Naive thymus-derived CD4-positive, alpha-beta T cell (primary cell): ENCODE measurements at regions of chr15 and their contacts with region 1.

Region 1: GRCh38 chr15:65869127-65869953 is at the start of gene RAB11A:
- DNase-seq: peak; percentile 91 to 97 (median 95)
- ATAC-seq: peak; percentile 96
- H3K4me3 ChIP-seq: peak within 1 kb of the TSS; percentile 94
- H3K4me3 Mint-ChIP-seq: peak within 1 kb of the TSS; percentile 88 to 100 (median 100)
- H3K27ac ChIP-seq: peak within 1 kb of the TSS; percentile 94
- H3K27ac Mint-ChIP-seq: peak within 1 kb of the TSS; percentile 97 to 100 (median 99)
- H3K4me1 ChIP-seq: peaks cover 5 to 24% of the 10 kb centered on the region in 2 donors
- H3K4me1 Mint-ChIP-seq: peaks cover 23 to 37% (median 32%) of the 10 kb centered on the region in 7 donors
- H3K27me3 ChIP-seq: no peaks in the 10 kb centered on the region
- H3K27me3 Mint-ChIP-seq: peaks cover 0 to 5% (median 0%) of the 10 kb centered on the region in 5 donors
- total RNA-seq, gene RAB11A: 80.9 to 201 (median 88.7) TPM

Region 2: DNA sequence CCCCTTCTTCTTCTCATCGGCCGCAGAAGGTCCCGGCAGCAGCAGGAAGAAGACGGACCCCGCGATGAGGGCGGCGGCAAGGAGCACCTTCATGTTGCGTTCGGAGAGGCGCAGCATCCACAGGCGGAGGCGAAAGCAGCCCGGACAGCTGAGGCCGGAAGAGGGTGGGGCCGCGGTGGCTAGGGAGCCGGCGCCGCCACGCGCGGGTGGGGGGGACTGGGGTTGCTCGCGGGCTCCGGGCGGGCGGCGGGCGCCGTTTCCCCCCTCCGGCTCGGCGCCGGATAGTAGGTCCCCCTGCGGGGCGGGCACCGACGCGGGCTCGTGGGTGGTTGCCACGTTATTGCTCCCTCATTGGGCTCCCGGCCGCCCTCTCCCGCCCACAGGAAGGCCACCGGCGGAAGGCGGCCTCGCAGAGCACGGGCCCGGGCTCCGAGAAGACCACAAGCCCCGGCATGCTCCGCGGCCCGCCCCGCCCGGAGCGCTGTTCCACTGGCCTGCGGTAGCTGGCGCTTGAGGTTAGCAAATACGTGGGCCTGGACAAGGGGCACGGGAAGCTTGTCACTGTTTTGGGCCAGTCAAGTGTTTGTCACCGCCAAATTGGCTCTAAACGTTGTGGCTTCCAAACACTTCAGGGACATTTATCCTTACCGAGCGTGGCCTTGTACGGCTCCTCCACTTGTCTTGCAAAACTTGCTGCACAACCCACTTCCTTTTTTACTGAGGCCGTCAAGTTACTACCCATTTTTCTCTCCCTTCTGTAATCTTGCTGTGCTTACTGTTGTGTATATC is 1706.3 kb before region 1 on chr15 and contains the start of gene PPIB:
- CTCF ChIA-PET with region 1: no interaction called
- POLR2A ChIA-PET with region 1: no interaction called
- intact Hi-C with region 1: loop called in 1 of 2 experiments (anchors 5 kb)
- DNase-seq: peak; percentile 89 to 98 (median 96)
- ATAC-seq: peak; percentile 97
- H3K4me3 ChIP-seq: peak within 1 kb of the TSS; percentile 76
- H3K4me3 Mint-ChIP-seq: peak within 1 kb of the TSS; percentile 80 to 97 (median 90)
- H3K27ac ChIP-seq: peak within 1 kb of the TSS; percentile 97
- H3K27ac Mint-ChIP-seq: peak within 1 kb of the TSS; percentile 83 to 97 (median 93)
- H3K4me1 ChIP-seq: peaks cover 17 to 29% of the 10 kb centered on the region in 2 donors
- H3K4me1 Mint-ChIP-seq: peaks cover 30 to 51% (median 46%) of the 10 kb centered on the region in 7 donors
- H3K27me3 ChIP-seq: no peaks in the 10 kb centered on the region
- H3K27me3 Mint-ChIP-seq: peaks cover 0 to 2% (median 0%) of the 10 kb centered on the region in 5 donors
- total RNA-seq, gene PPIB: 160 to 530 (median 184) TPM

Region 3: DNA sequence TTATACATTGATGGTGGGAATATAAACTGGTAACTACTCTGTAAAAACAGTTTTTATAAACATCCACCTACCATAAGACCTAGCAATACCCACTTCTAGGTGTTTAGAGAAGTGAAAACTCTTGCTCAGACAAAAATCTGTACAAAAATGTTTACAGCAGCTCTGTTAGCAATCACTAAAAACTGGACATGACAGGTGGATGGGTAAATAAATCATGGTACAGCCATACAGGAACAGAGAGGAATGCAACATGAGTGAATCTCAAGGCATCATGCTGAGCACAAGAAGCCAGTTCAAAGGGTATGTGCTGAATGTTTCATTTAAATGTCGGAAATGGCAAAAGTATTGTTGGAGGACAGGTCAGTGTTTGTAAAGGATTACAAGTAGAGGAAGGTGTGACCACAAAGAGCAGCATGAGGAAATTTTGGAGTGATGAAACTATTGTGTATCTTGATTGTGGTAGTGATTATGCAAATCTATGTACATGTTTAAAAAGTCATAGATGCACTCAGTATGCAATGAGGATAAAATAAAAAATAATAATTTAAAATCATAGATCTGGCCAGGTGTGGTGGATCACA is 576.3 kb before region 1 on chr15:
- CTCF ChIA-PET with region 1: no interaction called
- POLR2A ChIA-PET with region 1: no interaction called
- intact Hi-C with region 1: no loop called
- DNase-seq: no peak
- ATAC-seq: no peak
- H3K4me3 ChIP-seq: no peak overlapping the region
- H3K4me3 Mint-ChIP-seq: peak overlapping the region in 1 of 10 donors; percentile 12
- H3K27ac ChIP-seq: no peak overlapping the region
- H3K27ac Mint-ChIP-seq: peak overlapping the region in 1 of 9 donors; percentile 62
- H3K4me1 ChIP-seq: peaks cover 12 to 18% of the 10 kb centered on the region in 2 donors
- H3K4me1 Mint-ChIP-seq: peaks cover 12 to 33% (median 21%) of the 10 kb centered on the region in 7 donors
- H3K27me3 ChIP-seq: no peaks in the 10 kb centered on the region
- H3K27me3 Mint-ChIP-seq: peaks cover 0 to 2% (median 0%) of the 10 kb centered on the region in 5 donors

Region 4: GRCh38 chr15:65610871-65611718 is 258.2 kb before region 1 on chr15 and contains the start of gene INTS14:
- CTCF ChIA-PET with region 1: no interaction called
- POLR2A ChIA-PET with region 1: interaction called, 11 read pairs
- intact Hi-C with region 1: loop called (anchors 1 kb)
- DNase-seq: peak; percentile 74 to 96 (median 80)
- ATAC-seq: peak; percentile 99
- H3K4me3 ChIP-seq: peak within 1 kb of the TSS; percentile 97
- H3K4me3 Mint-ChIP-seq: peak within 1 kb of the TSS; percentile 95 to 99 (median 98)
- H3K27ac ChIP-seq: peak within 1 kb of the TSS; percentile 89
- H3K27ac Mint-ChIP-seq: peak within 1 kb of the TSS; percentile 97 to 100 (median 98)
- H3K4me1 ChIP-seq: peaks cover 18 to 21% of the 10 kb centered on the region in 2 donors
- H3K4me1 Mint-ChIP-seq: peaks cover 11 to 44% (median 32%) of the 10 kb centered on the region in 7 donors
- H3K27me3 ChIP-seq: no peaks in the 10 kb centered on the region
- H3K27me3 Mint-ChIP-seq: no peaks in the 10 kb centered on the region
- total RNA-seq, gene INTS14: 19.1 to 38.3 (median 35.9) TPM

Region 5: DNA sequence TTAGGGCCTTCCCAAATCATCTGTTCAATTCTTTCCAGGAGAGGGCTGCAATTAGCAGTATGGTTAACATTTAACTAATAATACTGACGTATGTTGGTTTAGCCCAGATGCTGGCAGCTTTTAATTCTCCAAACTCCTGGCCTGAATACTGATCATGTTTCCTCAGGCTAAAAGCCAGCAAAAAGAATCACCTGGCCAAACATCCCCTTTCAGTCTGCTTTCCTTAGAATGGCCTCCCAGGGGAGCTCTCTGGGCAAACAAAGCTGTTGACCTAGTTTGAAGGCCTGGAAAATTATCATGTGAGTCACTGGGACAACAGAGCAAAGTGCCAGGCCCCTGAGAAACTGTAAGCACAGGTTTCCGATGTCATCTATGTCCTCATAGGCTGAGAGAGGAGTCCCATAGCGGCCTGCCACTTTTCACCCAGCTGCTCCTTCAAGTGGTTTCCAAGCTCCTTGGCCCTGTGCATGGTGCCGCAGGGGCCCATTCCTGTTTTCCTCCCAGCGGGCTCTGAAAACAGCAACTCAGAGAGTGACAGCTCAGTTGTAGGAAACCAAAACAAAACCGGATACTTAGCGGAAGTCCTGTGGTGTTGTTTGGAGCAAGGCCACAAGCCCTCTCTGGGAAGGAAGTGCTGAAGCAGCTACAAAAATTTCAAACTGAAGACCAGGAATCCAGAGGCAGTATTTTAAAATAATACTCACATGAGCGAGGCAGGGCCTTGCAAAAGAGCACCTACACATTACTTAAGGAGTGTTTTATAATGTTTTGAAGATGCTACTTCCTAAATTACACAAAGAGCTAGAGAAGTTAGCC is 36.6 kb before region 1 on chr15:
- CTCF ChIA-PET with region 1: interaction called, 4 read pairs
- POLR2A ChIA-PET with region 1: interaction called, 9 read pairs
- intact Hi-C with region 1: loop called in 1 of 2 experiments (anchors 2 kb)
- DNase-seq: peak; percentile 27 to 69 (median 63)
- ATAC-seq: peak; percentile 67
- H3K4me3 ChIP-seq: peak overlapping the region; percentile 19
- H3K4me3 Mint-ChIP-seq: peak overlapping the region; percentile 73 to 87 (median 83)
- H3K27ac ChIP-seq: peak overlapping the region; percentile 68
- H3K27ac Mint-ChIP-seq: peak overlapping the region; percentile 87 to 99 (median 95)
- H3K4me1 ChIP-seq: peaks cover 42 to 50% of the 10 kb centered on the region in 2 donors
- H3K4me1 Mint-ChIP-seq: peaks cover 31 to 70% (median 59%) of the 10 kb centered on the region in 7 donors
- H3K27me3 ChIP-seq: no peaks in the 10 kb centered on the region
- H3K27me3 Mint-ChIP-seq: no peaks in the 10 kb centered on the region

Region 6: DNA sequence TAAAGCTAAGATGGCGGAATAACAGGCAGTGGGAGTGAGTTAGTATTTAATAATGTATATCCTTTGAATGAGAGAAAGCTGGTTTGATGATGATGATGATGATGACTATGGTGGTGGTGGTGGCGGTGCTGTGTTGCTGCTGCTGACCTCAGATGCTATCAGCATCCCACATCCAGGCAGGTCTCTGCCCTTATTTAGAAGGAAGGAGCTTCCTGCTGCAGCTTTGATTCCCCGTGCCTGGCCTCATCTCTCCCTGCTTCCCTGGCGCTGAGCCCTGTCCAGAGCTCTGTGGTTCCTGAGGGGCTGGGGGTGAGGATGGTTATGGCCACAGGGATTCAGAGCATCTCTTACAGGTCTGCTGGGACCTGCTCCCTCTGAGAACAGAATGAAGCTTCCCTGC is 73.1 kb after region 1 on chr15:
- CTCF ChIA-PET with region 1: no interaction called
- POLR2A ChIA-PET with region 1: interaction called, 3 read pairs
- intact Hi-C with region 1: loop called in 1 of 2 experiments (anchors 2 kb)
- DNase-seq: no peak
- ATAC-seq: no peak
- H3K4me3 ChIP-seq: no peak overlapping the region
- H3K4me3 Mint-ChIP-seq: peak overlapping the region in 1 of 10 donors; percentile 1
- H3K27ac ChIP-seq: no peak overlapping the region
- H3K27ac Mint-ChIP-seq: no peak overlapping the region
- H3K4me1 ChIP-seq: no peaks in the 10 kb centered on the region
- H3K4me1 Mint-ChIP-seq: peaks cover 4 to 18% (median 5%) of the 10 kb centered on the region in 7 donors
- H3K27me3 ChIP-seq: no peaks in the 10 kb centered on the region
- H3K27me3 Mint-ChIP-seq: peaks cover 0 to 23% (median 0%) of the 10 kb centered on the region in 5 donors

Region 7: DNA sequence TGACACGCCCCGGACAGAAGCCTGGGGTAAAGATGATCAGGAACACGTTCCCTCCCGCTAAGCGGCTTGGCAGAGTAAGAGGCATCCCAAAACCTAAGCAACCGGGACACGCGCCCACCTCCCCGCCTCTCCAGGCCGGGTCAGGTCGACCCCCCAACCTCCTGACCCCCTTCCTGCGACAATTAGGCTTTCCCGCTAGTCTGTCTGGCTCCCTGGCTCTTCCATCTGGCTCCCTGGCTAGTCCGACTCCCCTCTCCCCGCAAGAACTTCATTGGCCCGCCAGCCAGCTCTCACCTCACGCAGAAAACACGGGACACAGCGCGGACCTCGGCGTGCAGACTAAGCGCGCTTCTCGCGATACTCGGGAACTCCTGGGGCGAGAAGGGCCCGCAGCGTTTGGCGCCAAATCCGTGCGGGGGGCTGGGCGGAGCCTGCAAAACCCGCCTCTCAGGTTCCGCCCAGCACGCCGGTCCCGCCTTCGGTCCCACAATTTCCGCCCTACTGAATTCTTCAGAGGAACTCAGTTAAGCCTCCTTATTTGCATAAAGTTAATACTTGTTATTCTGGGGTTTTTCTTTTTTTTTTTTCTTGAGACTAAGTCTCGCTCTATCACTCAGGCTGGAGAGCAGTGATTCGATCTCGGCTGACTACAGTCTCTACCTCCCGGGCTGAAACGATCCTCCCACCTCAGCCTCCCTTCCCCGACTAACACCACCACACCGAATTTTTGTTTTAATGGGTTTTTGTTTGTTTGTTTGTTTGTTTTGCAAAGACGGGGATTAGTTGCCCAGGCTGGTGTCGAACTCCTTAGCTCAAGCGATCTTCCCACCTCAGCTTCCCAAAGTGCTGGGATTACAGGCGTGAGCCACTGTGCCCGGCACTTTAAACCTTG is 487.3 kb after region 1 on chr15 and contains the start of gene TIPIN:
- CTCF ChIA-PET with region 1: no interaction called
- POLR2A ChIA-PET with region 1: no interaction called
- intact Hi-C with region 1: loop called in 1 of 2 experiments (anchors 1 kb)
- DNase-seq: peak; percentile 90 to 96 (median 95)
- ATAC-seq: peak; percentile 99
- H3K4me3 ChIP-seq: peak within 1 kb of the TSS; percentile 92
- H3K4me3 Mint-ChIP-seq: peak within 1 kb of the TSS; percentile 92 to 100 (median 96)
- H3K27ac ChIP-seq: peak within 1 kb of the TSS; percentile 82
- H3K27ac Mint-ChIP-seq: peak within 1 kb of the TSS; percentile 90 to 98 (median 97)
- H3K4me1 ChIP-seq: peaks cover 4 to 6% of the 10 kb centered on the region in 2 donors
- H3K4me1 Mint-ChIP-seq: peaks cover 18 to 35% (median 26%) of the 10 kb centered on the region in 7 donors
- H3K27me3 ChIP-seq: no peaks in the 10 kb centered on the region
- H3K27me3 Mint-ChIP-seq: no peaks in the 10 kb centered on the region
- total RNA-seq, gene TIPIN: 3.8 to 28.2 (median 9.9) TPM